Body of pancreas (tissue), 4 donors: ENCODE measurements at regions of chr6 and their contacts with region 1.

Region 1: GRCh38 chr6:46419576-46420002 is 71.7 kb downstream of the RCAN2 start:
- DNase-seq: peak; percentile 65 to 78 (median 76)
- ATAC-seq: peak; percentile 68
- H3K4me3 ChIP-seq: no peak overlapping the region
- H3K27ac ChIP-seq: no peak overlapping the region
- H3K4me1 ChIP-seq: no peaks in the 10 kb centered on the region
- H3K27me3 ChIP-seq: no peaks in the 10 kb centered on the region
- CTCF ChIP-seq: peak; percentile 49 to 91 (median 83)
- POLR2A ChIP-seq: no peak

Region 2: GRCh38 chr6:46221222-46221793 is 198.3 kb before region 1 on chr6:
- intact Hi-C with region 1: loop called (anchors 10 kb)
- DNase-seq: peak in 1 of 4 donors; percentile 13
- ATAC-seq: peak; percentile 78
- H3K4me3 ChIP-seq: no peak overlapping the region
- H3K27ac ChIP-seq: no peak overlapping the region
- H3K4me1 ChIP-seq: peaks cover 15% of the 10 kb centered on the region
- H3K27me3 ChIP-seq: no peaks in the 10 kb centered on the region
- CTCF ChIP-seq: peak; percentile 43 to 93 (median 86)
- POLR2A ChIP-seq: no peak

Region 3: GRCh38 chr6:46616563-46616962 is 197.0 kb after region 1 on chr6:
- intact Hi-C with region 1: loop called (anchors 5 kb)
- DNase-seq: no peak
- ATAC-seq: no peak
- H3K4me3 ChIP-seq: no peak overlapping the region
- H3K27ac ChIP-seq: no peak overlapping the region
- H3K4me1 ChIP-seq: no peaks in the 10 kb centered on the region
- H3K27me3 ChIP-seq: no peaks in the 10 kb centered on the region
- CTCF ChIP-seq: no peak
- POLR2A ChIP-seq: no peak